Posterior cingulate gyrus (tissue), 11 donors: ENCODE measurements at regions of chr11 and their contacts with region 1.

Region 1: DNA sequence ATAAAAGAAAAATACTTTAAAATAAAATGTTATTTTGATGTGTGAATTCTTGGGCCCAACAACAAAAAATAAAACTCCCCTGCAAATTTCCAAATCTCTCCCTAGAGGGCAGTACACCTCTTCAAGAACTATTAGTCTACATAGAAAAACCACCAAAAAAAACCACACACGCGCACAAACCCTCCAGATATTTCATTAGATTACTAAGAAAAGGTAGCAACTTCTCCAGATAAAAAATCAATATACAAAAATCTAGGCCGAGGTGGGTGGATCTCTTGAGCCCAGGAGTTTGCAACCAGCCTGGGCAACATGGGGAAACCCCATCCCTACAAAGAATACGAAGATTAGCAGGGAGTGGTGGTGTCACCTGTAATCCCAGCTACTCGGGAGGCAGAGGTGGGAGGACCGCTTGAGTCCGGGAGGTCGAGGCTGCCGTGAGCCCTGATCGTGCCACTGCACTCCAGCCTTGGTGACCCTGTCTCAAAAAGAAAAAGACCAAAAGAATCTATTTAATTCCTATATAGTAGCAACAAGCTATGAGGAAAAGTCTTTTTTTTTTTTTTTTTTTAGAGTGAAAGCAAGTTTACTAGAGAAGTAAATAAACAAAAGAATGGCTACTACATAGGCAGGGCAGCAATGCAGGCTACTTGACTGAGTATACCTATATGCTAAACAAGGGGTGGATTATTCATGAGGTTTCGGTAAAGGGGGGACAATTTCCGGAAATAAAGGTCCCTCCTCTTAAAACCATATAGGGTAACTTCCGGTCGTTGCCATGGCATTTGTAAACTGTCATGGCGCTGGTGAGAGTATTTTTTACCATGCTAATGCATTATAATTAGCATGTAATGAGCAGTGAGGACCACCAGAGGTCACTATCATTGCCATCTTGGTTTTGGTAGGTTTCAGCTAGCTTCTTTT is 13.1 kb downstream of the B3GNT6 start:
- DNase-seq: peak in 7 of 10 donors; percentile 56 to 91 (median 69)

Region 2: DNA sequence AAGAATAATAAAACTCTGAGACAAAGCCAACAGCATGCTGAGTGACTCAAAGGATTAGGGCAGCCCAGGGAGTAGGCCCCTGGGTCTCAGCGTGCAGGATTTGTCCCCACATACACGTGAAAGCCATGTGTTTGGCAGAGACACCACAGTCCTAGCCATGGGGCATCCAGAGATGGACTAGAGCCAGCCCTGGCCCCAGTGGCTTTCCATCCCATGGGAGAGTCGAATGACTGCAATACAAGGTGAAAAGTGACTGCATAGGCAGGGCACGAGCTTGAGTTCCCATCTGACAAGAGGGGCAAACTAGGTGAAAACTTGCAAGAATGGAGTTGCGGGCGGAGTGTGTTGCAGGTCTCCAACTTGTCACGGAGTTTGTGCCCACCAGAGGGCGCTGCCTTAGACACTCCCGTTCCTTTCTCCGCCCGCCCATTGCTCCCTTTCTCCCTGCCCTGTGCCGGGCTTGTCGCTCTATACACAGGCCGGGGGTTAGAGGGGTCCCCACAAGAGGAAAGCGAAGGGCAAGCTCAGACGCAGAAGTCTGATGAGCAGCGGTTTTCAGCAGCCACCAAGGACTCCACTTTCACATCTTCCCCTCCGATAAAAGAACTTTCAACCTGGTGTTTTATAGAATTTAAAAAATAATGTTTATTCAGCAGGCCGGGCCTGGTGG is 239.9 kb before region 1 on chr11:
- intact Hi-C with region 1: loop called (anchors 5 kb)
- DNase-seq: peak; percentile 68 to 97 (median 88)

Region 3: DNA sequence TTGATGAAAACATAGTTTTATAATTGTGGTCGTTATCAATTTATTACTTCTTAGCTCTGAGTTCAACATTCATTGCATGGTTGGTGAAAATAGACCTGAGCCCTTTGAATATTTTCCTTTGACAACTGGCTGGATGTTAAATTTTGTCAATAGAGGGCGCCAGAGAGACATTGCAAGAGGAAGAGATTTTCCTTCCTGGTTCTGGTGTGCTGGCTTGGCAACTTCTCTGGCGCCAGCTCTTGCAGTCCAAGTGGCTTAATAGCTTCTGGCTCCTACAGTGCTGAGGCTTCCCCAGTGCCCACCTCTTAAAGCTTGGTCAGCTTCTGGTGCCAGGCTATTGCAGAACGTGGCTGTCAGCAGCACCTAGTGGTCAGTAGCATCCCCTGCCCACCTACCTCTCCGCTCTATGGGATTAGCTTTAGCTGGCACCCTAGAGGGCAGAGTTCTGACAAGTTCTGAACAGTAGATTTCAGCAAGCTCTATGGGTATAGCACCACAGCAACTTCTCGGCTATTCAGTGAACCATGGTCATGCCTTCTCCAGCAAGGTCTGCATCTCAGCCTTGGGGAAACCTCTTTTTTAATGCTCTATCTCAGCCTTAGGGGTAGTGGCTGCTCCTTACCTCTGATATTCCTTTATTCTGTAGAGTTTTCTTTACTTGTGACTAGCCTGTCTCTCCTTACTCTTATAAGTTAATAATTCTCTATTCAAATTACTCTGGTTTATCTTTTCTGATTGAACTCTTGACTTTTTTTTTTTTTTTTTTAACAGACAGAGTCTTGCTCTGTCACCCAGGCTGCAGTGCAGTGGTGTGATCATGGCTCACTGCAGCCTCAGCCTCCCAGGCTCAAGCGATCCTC is 127.2 kb before region 1 on chr11:
- intact Hi-C with region 1: loop called (anchors 5 kb)
- DNase-seq: peak in 9 of 10 donors; percentile 36 to 93 (median 67)

Region 4: GRCh38 chr11:77091146-77091940 is 44.1 kb after region 1 on chr11:
- intact Hi-C with region 1: loop called (anchors 1 kb)
- DNase-seq: peak; percentile 65 to 96 (median 83)

Region 5: DNA sequence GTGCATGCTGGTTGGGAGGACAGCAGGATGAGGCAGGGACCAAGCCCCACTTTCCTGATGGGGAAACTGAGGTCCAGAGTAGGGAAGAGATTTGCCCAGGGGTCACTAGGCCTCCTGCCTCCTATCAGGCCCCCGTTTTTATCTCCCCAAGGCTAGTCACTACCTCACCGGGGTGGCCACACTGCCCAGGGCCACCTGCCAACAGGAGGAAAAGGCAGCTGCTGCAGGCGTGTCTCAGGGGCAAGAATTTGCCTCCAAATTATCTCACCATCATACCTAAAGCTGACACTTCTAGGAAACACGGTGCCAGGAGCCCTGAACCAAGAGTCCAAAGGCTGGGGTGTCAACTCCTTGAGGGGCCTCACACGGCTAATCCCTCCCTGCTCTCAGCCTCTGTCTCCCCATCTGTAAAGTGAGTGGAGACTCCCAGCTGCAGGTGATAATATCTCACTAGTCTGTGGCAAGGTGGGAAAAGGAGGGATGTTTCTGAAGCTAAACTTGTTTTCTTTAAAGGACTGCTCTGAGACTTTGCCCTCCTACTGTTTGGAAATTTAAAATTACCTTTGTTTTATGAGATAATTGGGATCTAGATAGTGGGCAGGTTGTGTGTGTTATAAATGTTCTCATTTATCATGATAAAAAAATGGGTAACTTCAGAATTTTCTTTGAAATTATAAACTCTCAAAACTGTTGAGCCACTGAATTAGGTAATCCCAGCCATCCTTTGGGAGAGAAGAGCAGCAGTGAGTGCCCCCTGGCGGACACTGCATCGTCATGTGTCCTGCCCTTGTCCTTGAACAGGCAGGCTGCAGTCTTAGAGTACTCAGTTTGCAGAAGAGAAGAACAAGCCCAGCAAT is 140.7 kb after region 1 on chr11:
- intact Hi-C with region 1: loop called (anchors 5 kb)
- DNase-seq: peak; percentile 59 to 97 (median 84)

Region 6: GRCh38 chr11:77530879-77531278 is 483.6 kb after region 1 on chr11:
- intact Hi-C with region 1: no loop called
- DNase-seq: no peak

Region 7: DNA sequence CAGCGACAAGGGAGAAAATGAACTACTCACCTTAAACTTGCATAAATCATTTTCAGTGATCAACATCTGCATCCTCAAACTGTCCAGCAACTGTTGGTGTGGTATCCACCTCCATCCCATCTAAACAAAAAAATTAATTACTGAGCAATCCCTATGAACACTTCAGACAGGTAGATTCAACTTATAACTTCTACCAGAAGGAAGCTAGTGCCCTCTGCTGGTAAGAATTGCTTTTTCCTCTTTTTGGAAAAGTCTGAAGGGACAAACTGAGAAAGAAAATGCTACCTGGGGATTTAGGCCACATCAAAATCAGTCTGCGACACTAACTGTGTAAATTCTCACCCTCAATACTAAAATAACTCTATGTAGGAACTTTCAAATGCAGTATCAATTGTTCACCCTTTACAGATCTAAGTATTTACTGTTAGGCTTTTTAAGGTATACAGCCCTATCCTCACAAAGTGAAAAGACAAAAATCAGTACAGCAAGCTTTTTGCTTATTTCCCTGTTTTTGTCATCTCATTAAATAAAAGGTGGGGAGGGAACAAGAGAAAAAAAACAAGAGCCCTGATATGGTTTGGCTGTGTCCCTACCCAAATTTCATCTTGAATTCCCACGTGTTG is 572.4 kb after region 1 on chr11:
- intact Hi-C with region 1: loop called (anchors 10 kb)
- DNase-seq: no peak